Heart right ventricle (tissue), 16 donors: ENCODE measurements at regions of chr20 and their contacts with region 1.

Region 1: GRCh38 chr20:22691369-22692118 is 107.2 kb upstream of the FOXA2 start:
- DNase-seq: peak; percentile 79 to 82
- ATAC-seq: peak; percentile 89 to 96 (median 94)
- H3K4me3 ChIP-seq: peak overlapping the region in 5 of 10 donors; percentile 11 to 33 (median 24)
- H3K27ac ChIP-seq: peak overlapping the region in 9 of 10 donors; percentile 8 to 80 (median 43)
- H3K4me1 ChIP-seq: peaks cover 0 to 32% (median 16%) of the 10 kb centered on the region in 9 donors
- H3K27me3 ChIP-seq: no peaks in the 10 kb centered on the region
- CTCF ChIP-seq: peak; percentile 85 to 95 (median 94)

Region 2: GRCh38 chr20:22763257-22763906 is 71.8 kb after region 1 on chr20:
- intact Hi-C with region 1: loop called in 1 of 10 experiments (anchors 10 kb)
- DNase-seq: peak; percentile 39 to 58
- ATAC-seq: peak; percentile 78 to 98 (median 94)
- H3K4me3 ChIP-seq: peak overlapping the region in 5 of 10 donors; percentile 22 to 34 (median 31)
- H3K27ac ChIP-seq: peak overlapping the region; percentile 7 to 91 (median 73)
- H3K4me1 ChIP-seq: peaks cover 0 to 32% (median 16%) of the 10 kb centered on the region in 9 donors
- H3K27me3 ChIP-seq: no peaks in the 10 kb centered on the region
- CTCF ChIP-seq: no peak

Region 3: DNA sequence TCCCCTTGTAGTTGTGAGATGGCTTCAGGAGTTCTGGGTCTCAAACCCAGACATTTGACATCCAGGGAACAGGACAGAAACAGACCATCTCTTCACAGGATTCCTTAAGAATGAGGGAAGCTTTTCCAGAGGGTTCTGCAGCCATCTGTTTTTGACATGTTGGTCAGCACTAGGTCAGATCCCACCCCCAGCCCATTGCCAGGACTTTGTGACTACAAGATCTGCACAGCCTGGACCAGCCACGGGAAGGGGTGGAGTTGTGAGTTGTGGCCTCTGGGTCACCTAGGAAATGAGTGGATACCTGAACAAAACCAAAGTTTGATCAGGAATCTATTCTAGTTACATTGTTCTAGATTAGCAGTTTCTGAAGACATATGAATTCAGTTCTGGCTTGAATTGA is 304.4 kb after region 1 on chr20:
- intact Hi-C with region 1: no loop called
- DNase-seq: no peak
- ATAC-seq: peak in 2 of 8 donors; percentile 33 to 48
- H3K4me3 ChIP-seq: no peak overlapping the region
- H3K27ac ChIP-seq: no peak overlapping the region
- H3K4me1 ChIP-seq: peaks cover 0 to 18% (median 0%) of the 10 kb centered on the region in 9 donors
- H3K27me3 ChIP-seq: no peaks in the 10 kb centered on the region
- CTCF ChIP-seq: no peak

Region 4: DNA sequence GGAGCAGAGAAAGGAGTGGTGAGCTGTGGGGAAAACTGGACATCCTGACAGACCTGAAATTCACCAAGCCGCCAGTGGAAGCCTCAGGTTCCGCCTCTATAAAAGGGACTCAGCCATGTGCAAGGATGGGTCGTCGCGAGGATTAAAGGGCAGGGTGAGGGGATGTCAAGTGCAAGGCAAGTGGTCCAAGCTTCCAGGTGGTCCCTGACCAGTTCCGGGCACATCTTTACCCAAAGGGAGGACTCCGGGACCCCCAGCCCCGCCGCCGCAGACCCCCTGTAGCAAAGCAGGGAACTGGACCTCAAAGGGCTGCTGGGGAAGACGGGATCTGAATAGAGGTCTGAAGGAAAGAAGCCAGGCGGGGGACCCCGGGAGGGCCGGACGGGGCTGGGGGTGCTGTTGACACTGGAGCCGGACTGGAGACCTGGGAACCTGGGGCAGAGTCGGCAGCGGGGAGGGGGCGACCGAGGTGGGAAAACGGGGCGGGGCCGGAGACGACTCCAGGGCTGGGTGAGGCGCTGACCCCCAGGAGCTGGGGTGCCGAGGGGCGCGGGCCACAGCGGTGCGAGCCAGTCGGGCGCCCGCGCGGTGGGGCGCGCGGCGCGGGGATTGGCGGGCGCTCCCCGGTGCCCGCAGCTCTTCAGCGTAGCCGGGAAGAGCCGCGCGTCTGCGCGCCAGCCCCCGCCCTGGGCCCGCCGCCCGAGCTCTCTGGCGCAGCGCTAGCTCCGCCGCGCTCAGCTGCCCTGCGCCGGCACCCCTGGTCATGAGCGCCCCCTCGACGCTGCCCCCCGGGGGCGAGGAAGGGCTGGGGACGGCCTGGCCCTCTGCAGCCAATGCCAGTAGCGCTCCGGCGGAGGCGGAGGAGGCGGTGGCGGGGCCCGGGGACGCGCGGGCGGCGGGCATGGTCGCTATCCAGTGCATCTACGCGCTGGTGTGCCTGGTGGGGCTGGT is 343.5 kb after region 1 on chr20 and contains the start of gene SSTR4:
- intact Hi-C with region 1: loop called in 5 of 10 experiments (anchors 5 to 10 kb)
- DNase-seq: no peak
- ATAC-seq: no peak
- H3K4me3 ChIP-seq: peak within 1 kb of the TSS in 5 of 10 donors; percentile 28 to 41 (median 35)
- H3K27ac ChIP-seq: no peak within 1 kb of the TSS
- H3K4me1 ChIP-seq: peaks cover 0 to 20% (median 15%) of the 10 kb centered on the region in 9 donors
- H3K27me3 ChIP-seq: peaks cover 0 to 68% (median 42%) of the 10 kb centered on the region in 7 donors
- CTCF ChIP-seq: no peak
- total RNA-seq, gene SSTR4: not detected

Region 5: DNA sequence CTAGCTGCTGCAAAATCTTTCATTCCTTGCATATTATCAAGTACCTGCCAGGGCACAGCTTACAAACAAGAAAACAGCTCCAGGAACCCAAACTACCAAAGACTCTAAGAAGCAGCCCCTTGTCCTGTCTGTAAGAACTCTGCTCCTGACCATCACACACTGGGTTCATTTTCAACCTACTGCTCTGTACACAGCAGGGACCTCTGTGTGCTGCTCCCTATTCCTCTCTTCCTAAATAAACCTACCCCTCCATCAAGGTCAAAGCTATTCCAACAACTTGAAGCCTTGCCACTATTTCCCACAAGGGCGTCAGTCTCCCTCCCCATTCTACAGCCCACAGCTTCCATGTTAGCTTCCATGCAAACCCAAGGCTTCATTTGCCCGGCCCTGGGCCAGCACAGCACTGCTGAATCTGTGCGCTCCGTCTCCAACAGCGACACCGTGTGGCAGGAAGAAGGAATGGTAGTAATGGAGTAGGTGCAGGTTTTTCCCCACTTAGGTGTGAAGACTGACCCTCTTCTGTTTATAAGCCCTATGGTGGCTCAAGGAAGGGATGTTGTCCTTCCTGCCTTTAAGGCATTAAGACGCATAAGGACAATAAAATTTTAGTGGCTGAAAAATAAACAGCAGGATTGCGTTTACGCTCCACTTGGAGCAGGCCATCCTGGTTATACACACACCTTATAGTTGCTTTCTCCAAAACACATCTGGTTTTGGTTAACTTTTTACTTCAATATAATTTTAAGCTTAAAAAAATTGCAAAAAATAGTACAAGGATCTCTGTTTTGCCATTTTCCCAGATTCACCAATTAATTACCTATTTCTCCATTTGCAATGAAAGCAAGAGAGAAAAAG is 543.9 kb after region 1 on chr20:
- intact Hi-C with region 1: loop called in 7 of 10 experiments (anchors 5 to 10 kb)
- DNase-seq: peak; percentile 73 to 77
- ATAC-seq: peak; percentile 88 to 95 (median 92)
- H3K4me3 ChIP-seq: no peak overlapping the region
- H3K27ac ChIP-seq: no peak overlapping the region
- H3K4me1 ChIP-seq: peaks cover 0 to 11% (median 0%) of the 10 kb centered on the region in 9 donors
- H3K27me3 ChIP-seq: no peaks in the 10 kb centered on the region
- CTCF ChIP-seq: peak; percentile 81 to 92 (median 89)

Region 6: GRCh38 chr20:23340524-23340923 is 649.0 kb after region 1 on chr20:
- intact Hi-C with region 1: loop called (anchors 1 to 5 kb)
- DNase-seq: peak; percentile 41 to 80
- ATAC-seq: peak; percentile 68 to 92 (median 88)
- H3K4me3 ChIP-seq: no peak overlapping the region
- H3K27ac ChIP-seq: no peak overlapping the region
- H3K4me1 ChIP-seq: peaks cover 0 to 10% (median 0%) of the 10 kb centered on the region in 9 donors
- H3K27me3 ChIP-seq: no peaks in the 10 kb centered on the region
- CTCF ChIP-seq: peak; percentile 55 to 89 (median 75)